GM13977 (cell line): ENCODE measurements at regions of chr16 and their contacts with region 1.

Region 1: DNA sequence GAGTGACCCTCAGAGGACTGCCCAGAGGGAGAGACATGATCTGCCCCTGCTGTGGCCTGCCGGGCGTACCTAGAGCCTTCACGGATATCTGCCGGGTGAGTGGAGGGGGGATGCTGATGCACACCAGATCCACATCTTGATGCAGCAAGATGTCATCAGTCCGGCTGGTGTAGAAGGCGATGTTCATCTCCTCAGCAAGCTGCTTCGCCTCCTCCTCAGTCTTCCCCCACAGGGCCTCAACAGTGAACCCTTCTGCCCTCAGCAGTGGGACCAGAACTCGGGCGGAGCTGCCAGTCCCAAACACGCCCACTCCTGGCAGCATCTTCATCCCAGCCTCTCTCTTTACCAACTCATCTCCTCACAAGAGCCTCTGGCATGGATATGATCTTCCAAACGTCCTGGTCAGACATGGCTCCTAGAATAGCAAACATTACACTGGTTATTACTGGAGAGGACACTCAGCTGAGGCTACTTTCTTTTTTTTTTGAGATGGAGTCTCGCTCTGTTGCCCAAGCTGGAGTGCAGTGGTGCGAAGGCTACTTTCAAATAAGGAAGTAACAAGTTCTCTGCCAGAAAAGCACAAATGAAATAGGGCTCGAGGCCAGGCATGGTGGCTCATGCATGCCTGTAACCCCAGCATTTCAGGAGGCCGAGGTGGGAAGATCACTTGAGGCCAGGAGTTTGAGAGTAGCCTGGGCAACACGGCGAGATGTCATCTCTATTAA is 18.9 kb downstream of the C16orf86 start:
- DNase-seq: no peak
- CTCF ChIP-seq: no peak

Region 2: GRCh38 chr16:67865316-67865715 is 179.8 kb after region 1 on chr16:
- in situ Hi-C with region 1: no loop called
- DNase-seq: no peak
- CTCF ChIP-seq: peak; percentile 59

Region 3: GRCh38 chr16:67928561-67929364 is 243.2 kb after region 1 on chr16:
- in situ Hi-C with region 1: loop called (anchors 10 kb)
- DNase-seq: peak; percentile 88
- CTCF ChIP-seq: peak; percentile 90